Activated CD4-positive, alpha-beta T cell treated with anti-CD3 and anti-CD28 coated beads for 36 hours (primary cell): ENCODE measurements at regions of chr14 and their contacts with region 1.

Region 1: DNA sequence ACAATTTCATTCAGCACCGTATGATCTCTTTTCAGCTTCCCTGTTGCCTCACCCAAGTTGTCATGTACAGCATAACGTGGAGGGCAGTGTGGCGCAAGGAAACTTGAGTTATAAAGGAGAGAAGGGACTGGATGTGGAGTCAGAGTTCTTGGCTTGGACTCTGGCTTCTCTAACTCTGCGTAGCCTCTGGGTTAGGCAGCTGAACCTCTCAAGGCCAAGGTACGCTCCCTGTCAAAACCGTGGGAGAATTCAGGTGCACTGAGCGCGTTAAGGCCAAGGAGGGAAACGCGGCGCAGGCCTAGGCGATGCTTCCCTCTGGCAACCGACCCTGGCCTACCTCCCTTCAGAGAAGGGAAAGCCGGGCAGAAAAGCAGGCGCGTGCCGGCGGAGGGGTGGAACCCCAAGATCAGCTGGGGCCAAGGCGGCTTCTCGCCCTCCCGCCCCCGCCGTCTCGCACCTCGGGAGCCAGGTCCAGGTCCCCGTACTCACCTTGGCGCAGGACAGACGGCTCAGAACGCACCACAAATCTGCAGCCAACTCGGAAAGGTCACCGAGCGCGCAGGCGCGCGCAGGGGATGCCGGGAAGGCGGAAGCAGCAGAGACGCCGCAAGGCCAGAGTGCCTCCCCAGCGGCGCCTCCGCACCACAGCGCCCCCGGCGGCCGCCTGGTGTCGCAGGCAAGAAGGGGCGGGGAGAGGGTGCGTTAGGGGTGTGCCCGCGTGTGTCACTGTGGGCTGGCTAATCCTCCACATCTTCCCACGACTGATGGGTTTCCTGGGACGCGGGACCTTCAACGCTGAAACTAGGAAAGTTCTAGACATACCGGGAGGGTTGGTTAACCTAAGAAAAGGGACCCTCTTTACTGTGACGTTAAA is 7.0 kb upstream of the TDRD9 start:
- DNase-seq: peak; percentile 97
- ATAC-seq: peak; percentile 99
- H3K4me3 Mint-ChIP-seq: peak overlapping the region; percentile 85
- H3K27ac Mint-ChIP-seq: peak overlapping the region; percentile 80
- H3K4me1 Mint-ChIP-seq: peaks cover 12% of the 10 kb centered on the region
- H3K27me3 Mint-ChIP-seq: peaks cover 6% of the 10 kb centered on the region

Region 2: DNA sequence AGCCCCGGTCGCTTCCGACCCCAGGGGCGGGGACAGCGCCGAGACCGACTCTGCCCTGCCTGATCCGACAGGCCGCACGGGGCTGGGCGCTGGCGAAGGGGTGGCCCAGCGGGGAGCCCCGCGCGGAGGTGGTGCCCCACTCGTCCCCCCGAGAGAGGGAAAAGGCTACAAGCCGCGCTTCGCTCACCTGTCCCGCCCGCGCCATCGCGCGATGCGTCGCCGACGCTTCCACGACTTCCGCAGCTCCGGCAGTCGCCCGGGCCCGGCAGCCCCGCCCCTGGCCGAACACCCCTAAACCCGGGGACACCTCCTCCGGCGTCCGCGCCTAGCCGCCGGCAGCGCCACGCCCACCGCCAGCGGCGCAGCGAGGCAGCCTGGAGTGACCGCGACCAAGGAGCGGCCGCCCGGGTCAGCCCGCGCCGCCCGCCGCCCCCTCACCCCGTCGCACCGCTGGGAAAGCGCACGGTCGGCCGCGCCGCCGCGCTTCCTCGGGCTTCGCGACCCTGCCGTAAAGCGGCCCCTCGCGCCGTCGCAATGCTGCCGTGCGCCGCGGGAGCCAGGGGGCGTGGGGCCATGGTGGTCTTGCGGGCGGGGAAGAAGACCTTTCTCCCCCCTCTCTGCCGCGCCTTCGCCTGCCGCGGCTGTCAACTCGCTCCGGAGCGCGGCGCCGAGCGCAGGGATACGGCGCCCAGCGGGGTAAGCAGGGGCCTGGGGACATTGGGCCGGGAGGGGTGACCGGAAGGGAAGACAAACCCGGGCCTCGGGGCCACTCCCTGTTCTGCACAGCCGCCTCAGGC is 358.6 kb before region 1 on chr14 and contains the starts of genes BAG5 and COA8:
- CTCF ChIA-PET with region 1: no interaction called
- POLR2A ChIA-PET with region 1: interaction called, 3 read pairs
- intact Hi-C with region 1: loop called in 1 of 2 experiments (anchors 1 kb)
- DNase-seq: peak; percentile 93
- ATAC-seq: peak; percentile 78
- H3K4me3 Mint-ChIP-seq: peak within 1 kb of the TSS; percentile 94
- H3K27ac Mint-ChIP-seq: peak within 1 kb of the TSS; percentile 91
- H3K4me1 Mint-ChIP-seq: peaks cover 61% of the 10 kb centered on the region
- H3K27me3 Mint-ChIP-seq: no peaks in the 10 kb centered on the region
- total RNA-seq, gene BAG5: 24.2 to 25.1 TPM
- total RNA-seq, gene COA8: 39.6 to 41.7 TPM

Region 3: DNA sequence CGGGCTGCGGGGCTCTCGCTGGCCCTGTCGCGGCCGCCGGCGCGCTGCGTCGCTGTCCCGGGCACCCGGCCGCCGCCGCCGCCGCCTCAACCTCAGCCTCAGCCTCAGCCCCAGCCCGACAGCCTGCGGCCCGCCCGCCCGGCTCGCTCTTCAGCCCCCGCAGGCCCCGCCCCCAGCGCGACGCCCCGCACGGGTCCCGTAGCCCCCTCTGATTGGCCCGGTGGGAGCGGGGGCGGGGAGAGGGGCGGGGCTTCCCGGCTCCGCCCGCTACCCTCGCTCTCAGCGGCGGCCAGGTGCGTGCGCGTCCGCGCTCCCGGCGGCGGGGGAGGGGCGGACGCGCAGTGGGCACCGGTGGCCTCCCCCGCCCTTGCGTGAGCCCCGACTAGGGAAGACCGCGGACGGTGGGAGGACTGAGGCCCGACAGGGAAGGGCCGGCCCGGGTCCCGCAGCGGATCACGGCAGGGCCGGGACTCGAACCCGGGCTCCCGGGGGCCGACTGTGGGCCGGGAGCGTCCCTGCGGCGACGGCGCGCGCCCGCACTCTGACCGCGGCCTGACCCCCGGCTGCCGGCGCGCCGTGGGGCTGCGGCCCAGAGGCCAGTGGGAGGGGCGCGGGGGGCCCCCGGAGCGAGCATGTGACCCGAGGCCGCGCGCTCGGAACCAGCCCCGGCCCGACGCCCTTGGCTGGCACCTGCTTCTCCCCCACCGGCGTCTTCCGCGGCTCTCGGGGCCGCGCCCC is 73.6 kb before region 1 on chr14 and contains the start of gene PPP1R13B:
- CTCF ChIA-PET with region 1: no interaction called
- POLR2A ChIA-PET with region 1: no interaction called
- intact Hi-C with region 1: loop called in 1 of 2 experiments (anchors 1 kb)
- DNase-seq: peak; percentile 97
- ATAC-seq: peak; percentile 98
- H3K4me3 Mint-ChIP-seq: peak within 1 kb of the TSS; percentile 76
- H3K27ac Mint-ChIP-seq: peak within 1 kb of the TSS; percentile 38
- H3K4me1 Mint-ChIP-seq: peaks cover 16% of the 10 kb centered on the region
- H3K27me3 Mint-ChIP-seq: peaks cover 5% of the 10 kb centered on the region
- total RNA-seq, gene PPP1R13B: 9.3 to 10.3 TPM

Region 4: GRCh38 chr14:103910262-103910935 is 10.8 kb before region 1 on chr14:
- CTCF ChIA-PET with region 1: interaction called, 10 read pairs
- POLR2A ChIA-PET with region 1: no interaction called
- intact Hi-C with region 1: no loop called
- DNase-seq: peak; percentile 88
- ATAC-seq: peak; percentile 92
- H3K4me3 Mint-ChIP-seq: peak overlapping the region; percentile 17
- H3K27ac Mint-ChIP-seq: peak overlapping the region; percentile 76
- H3K4me1 Mint-ChIP-seq: peaks cover 19% of the 10 kb centered on the region
- H3K27me3 Mint-ChIP-seq: no peaks in the 10 kb centered on the region

Region 5: GRCh38 chr14:103974575-103974974 is 53.4 kb after region 1 on chr14:
- CTCF ChIA-PET with region 1: no interaction called
- POLR2A ChIA-PET with region 1: no interaction called
- intact Hi-C with region 1: no loop called
- DNase-seq: no peak
- ATAC-seq: no peak
- H3K4me3 Mint-ChIP-seq: no peak overlapping the region
- H3K27ac Mint-ChIP-seq: no peak overlapping the region
- H3K4me1 Mint-ChIP-seq: no peaks in the 10 kb centered on the region
- H3K27me3 Mint-ChIP-seq: peaks cover 12% of the 10 kb centered on the region